Activated T-helper 2 cell treated with anti-CD3 and anti-CD28 coated beads, Interferon-gamma antibody, Interleukin-2, Interleukin-4, amounts not matched to agents 10 μg/mL and 5 μg/mL and 100 μg/mL, durations not matched to agents 14 hours and 24 hours and 36 hours (primary cell): ENCODE measurements at regions of chr14 and their contacts with region 1.

Region 1: GRCh38 chr14:74018586-74019407 is at the starts of genes BBOF1 and ENTPD5:
- DNase-seq: peak; percentile 86
- H3K4me3 Mint-ChIP-seq: peak within 1 kb of the TSS; percentile 97
- H3K27ac Mint-ChIP-seq: peak within 1 kb of the TSS; percentile 98
- H3K4me1 Mint-ChIP-seq: peaks cover 11% of the 10 kb centered on the region
- H3K27me3 Mint-ChIP-seq: peaks cover 2% of the 10 kb centered on the region
- total RNA-seq, gene BBOF1: 0.23 and 0.82 TPM in 2 replicates
- total RNA-seq, gene ENTPD5: 9.9 and 11.5 TPM in 2 replicates

Region 2: GRCh38 chr14:73886449-73887317 is 132.1 kb before region 1 on chr14 and contains the start of gene ZNF410:
- intact Hi-C with region 1: loop called (anchors 2 kb)
- DNase-seq: peak; percentile 84
- H3K4me3 Mint-ChIP-seq: peak within 1 kb of the TSS; percentile 84
- H3K27ac Mint-ChIP-seq: peak within 1 kb of the TSS; percentile 98
- H3K4me1 Mint-ChIP-seq: peaks cover 39% of the 10 kb centered on the region
- H3K27me3 Mint-ChIP-seq: no peaks in the 10 kb centered on the region
- total RNA-seq, gene ZNF410: 77.5 and 82.9 TPM in 2 replicates

Region 3: GRCh38 chr14:73997108-73997943 is 21.5 kb before region 1 on chr14:
- intact Hi-C with region 1: no loop called
- DNase-seq: no peak
- H3K4me3 Mint-ChIP-seq: no peak overlapping the region
- H3K27ac Mint-ChIP-seq: no peak overlapping the region
- H3K4me1 Mint-ChIP-seq: no peaks in the 10 kb centered on the region
- H3K27me3 Mint-ChIP-seq: no peaks in the 10 kb centered on the region

Region 4: GRCh38 chr14:74038015-74038859 is 19.4 kb after region 1 on chr14:
- intact Hi-C with region 1: no loop called
- DNase-seq: no peak
- H3K4me3 Mint-ChIP-seq: no peak overlapping the region
- H3K27ac Mint-ChIP-seq: no peak overlapping the region
- H3K4me1 Mint-ChIP-seq: no peaks in the 10 kb centered on the region
- H3K27me3 Mint-ChIP-seq: no peaks in the 10 kb centered on the region